ENCODE measurements at regions of chr10 and their contacts with region 1.

Region 1: GRCh38 chr10:76036111-76036940 is 604.9 kb downstream of the LRMDA start:
- DNase-seq: peak; percentile 79

Region 2: DNA sequence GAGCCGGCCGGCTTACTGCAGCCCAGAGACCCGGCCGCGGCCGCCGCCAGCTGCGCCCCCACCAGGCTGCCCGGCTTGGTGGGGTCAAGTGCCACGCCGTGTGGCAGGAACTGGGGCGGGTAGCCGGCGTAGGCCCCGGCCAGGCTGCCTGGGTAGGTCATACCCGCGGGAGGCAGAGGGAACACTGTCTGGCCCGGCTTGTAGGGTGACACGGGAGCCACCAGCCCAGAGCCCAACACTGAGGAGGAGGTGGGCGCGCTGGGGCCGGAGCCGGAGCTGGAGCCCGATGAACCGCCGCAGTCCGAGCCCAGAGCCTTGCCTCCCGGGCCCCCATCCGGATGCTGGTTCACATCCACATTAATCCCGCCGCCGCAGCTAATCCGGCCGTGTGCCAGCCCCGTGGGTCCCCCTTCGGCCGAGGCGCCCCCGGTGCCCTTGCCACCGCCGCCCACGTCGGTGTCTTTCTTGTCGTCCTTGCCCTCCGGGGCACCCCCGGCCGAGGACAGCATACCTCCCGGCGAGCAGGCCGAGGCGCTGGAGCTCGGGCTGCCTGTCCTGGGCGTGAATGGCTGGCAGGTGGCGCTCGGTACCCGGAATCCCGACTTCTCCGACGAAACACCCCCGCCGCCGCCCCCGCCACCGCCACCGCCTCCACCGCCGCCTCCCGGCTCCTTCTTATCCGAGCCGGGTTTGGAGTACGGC is 636.7 kb before region 1 on chr10:
- in situ Hi-C with region 1: loop called (anchors 25 kb)
- DNase-seq: peak; percentile 66

Region 3: DNA sequence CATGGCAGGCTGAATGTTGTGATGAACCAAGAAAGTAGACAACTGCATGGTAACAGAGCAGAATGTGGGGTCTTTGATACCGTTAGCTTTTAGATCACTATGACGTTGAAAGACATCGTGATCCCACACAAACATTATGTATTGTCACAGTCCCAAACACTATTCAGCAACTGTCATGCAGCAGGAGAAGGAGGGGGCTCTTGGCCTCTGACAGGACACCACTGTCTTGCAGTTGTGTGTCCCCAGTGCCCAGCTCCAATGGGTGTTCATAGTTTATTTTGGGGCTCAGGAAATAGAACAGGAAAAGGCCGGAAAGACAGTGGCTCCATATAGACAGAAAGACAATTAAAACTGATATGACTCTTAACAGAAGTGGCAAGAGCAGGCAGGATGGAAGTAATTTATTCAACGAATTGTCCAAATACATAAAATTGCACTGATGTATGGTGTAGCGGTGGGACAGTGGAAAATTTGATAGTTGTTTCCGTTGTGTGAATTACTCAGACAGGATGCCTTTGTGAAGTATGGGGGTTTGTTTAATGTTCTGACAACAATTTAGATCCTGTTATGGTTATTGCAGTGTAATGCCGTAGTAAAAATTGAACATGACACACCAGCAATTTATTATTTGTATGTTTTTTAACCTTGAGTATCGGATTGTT is 312.9 kb before region 1 on chr10:
- in situ Hi-C with region 1: no loop called
- DNase-seq: no peak

Measured in KBM-7 (cell line).